ENCODE measurements at regions of chr7 and their contacts with region 1.

Region 1: DNA sequence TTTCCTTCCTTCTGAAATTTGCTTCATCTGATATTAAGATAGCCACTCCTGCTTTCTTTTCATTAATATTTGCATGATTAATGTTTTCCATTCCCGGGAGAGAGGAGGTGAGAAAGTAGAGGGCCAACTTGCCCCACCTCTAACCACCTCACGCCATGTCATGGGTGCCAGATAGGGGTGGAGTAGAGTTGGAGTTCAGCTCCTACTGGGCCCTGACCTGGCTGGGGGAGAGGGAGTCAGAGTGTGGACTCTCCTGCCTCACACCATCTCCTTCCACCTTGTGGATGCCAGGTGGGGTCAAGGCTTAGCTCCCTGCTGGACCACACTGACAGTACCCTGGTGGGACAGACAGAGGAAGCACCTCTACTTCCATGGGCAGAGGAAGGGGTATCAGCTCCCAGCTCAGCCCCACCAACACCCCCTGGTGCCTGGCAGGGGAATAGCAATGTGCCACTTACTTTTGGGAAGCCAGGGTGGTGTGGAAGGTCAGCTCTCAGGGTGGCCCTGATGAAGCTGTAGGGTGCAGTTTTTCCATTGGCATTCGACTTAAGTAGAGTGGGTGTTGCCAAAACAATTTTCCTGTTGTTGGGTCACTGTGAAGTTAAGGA is 28.0 kb downstream of the CHST12 start:
- DNase-seq: peak; percentile 38
- ATAC-seq: no peak
- H3K4me3 Mint-ChIP-seq: no peak overlapping the region
- H3K27ac Mint-ChIP-seq: peak overlapping the region; percentile 2
- H3K4me1 Mint-ChIP-seq: peaks cover 25% of the 10 kb centered on the region
- H3K27me3 Mint-ChIP-seq: no peaks in the 10 kb centered on the region

Region 2: DNA sequence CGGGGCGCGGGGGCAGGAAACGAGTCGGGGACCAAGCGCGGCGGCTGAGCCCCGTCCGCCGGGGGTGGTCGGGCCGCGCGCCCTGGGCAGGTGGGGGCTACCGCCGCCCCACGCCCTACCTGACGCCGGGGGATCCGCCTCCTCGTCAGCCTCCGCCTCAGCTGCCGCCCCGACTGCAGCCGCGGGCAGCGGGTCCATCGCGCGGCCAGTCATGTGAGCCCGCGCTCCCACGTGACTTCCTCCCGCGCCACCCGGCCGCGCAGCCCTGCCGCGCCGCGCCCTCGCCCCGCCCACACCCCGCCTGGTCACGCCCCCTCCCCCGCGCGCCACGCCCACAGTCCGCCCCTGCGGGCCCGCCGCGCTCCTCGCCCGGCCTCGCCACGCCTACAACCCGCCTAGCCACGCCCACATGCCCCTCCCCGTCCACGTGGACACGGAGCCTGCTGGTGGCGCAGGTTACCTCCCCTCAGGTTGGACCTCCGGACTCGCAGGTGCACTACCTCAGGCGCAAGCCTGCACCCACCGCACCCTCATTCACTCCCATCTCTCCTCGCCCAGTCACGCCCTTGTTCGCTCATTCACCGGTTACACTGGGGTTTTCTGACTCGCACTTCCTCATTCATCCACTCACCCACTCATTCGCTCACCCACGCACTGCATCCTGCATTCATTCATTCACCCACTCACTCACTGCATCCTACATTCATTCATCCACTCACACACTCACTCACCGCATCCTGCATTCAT is 117.0 kb before region 1 on chr7 and contains the start of gene SNX8:
- CTCF ChIA-PET with region 1: no interaction called
- POLR2A ChIA-PET with region 1: no interaction called
- DNase-seq: peak; percentile 97
- ATAC-seq: peak; percentile 93
- H3K4me3 Mint-ChIP-seq: peak within 1 kb of the TSS; percentile 89
- H3K27ac Mint-ChIP-seq: peak within 1 kb of the TSS; percentile 86
- H3K4me1 Mint-ChIP-seq: peaks cover 14% of the 10 kb centered on the region
- H3K27me3 Mint-ChIP-seq: peaks cover 2% of the 10 kb centered on the region
- total RNA-seq, gene SNX8: 28.3 to 35.8 TPM

Region 3: DNA sequence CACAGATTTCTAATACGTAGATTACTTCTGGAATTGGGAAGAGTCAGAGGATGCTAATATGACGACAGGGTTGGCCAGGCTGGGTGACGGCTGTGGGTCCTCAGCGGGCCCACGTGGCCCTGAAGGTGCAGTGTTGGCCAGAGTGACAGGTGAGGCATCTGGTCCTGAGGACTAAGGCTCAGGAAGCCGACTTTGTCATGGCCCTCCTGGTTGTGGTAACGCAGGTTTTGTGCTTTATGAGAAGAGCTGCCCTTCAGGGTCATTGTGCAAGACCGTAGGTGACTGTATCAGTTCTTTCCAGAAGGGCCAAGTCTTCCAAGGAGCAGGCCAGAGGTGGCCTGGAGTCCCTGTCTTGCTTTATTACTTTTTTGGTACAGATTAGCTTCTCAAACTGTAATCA is 74.2 kb before region 1 on chr7:
- CTCF ChIA-PET with region 1: no interaction called
- POLR2A ChIA-PET with region 1: no interaction called
- DNase-seq: no peak
- ATAC-seq: no peak
- H3K4me3 Mint-ChIP-seq: peak overlapping the region; percentile 85
- H3K27ac Mint-ChIP-seq: no peak overlapping the region
- H3K4me1 Mint-ChIP-seq: peaks cover 41% of the 10 kb centered on the region
- H3K27me3 Mint-ChIP-seq: no peaks in the 10 kb centered on the region

Region 4: GRCh38 chr7:2411815-2412586 is 19.4 kb before region 1 on chr7:
- CTCF ChIA-PET with region 1: interaction called, 11 read pairs
- POLR2A ChIA-PET with region 1: no interaction called
- DNase-seq: no peak
- ATAC-seq: no peak
- H3K4me3 Mint-ChIP-seq: no peak overlapping the region
- H3K27ac Mint-ChIP-seq: no peak overlapping the region
- H3K4me1 Mint-ChIP-seq: peaks cover 72% of the 10 kb centered on the region
- H3K27me3 Mint-ChIP-seq: no peaks in the 10 kb centered on the region

Measured in activated CD8-positive, alpha-beta T cell treated with anti-CD3 and anti-CD28 coated beads, Interleukin-2, amount 10 ng/mL, durations not matched to agents 7 days and 5 days (primary cell).